ENCODE measurements at regions of chr11 and their contacts with region 1.

Region 1: DNA sequence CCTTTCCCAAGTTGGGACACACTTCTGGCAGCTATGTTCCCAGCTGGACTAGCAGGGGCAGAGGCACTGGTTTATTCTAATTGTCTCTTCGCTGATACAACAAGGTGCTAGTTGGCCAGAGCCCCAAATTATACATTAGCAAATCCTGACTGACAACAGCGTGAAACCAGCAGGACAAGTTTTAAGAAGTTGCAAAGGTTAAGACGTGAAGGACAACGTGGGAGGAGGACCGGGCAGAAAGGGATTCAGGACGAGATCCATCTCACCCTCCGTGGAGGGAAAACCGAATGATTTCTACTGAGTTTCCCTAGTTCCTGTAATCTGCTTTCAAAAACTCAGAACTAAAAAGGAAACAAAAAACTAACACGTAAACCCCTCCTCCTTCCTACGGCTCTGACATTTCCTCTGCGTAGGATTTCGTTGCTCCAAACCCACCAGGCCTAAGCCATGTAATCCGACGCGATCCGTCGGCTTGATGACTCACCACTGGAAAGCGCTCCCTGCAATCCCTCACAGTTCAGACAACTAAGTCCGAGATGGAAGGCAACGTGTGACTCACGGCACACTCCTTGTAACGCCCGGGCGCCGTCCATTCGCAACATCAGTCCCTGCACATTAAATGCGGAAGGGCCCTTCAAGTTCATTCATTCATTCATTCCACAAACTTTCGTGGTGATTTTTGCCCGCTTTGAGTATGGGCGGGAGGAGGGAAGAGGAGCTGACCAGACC is 703 bp downstream of the POGLUT3 start:
- DNase-seq: peak; percentile 89 to 94
- ATAC-seq: peak; percentile 98 to 99 (median 98)
- H3K4me3 ChIP-seq: peak overlapping the region; percentile 75
- H3K27ac ChIP-seq: peak overlapping the region; percentile 93
- H3K4me1 ChIP-seq: peaks cover 11% of the 10 kb centered on the region
- H3K27me3 ChIP-seq: no peaks in the 10 kb centered on the region
- CTCF ChIP-seq: no peak

Region 2: DNA sequence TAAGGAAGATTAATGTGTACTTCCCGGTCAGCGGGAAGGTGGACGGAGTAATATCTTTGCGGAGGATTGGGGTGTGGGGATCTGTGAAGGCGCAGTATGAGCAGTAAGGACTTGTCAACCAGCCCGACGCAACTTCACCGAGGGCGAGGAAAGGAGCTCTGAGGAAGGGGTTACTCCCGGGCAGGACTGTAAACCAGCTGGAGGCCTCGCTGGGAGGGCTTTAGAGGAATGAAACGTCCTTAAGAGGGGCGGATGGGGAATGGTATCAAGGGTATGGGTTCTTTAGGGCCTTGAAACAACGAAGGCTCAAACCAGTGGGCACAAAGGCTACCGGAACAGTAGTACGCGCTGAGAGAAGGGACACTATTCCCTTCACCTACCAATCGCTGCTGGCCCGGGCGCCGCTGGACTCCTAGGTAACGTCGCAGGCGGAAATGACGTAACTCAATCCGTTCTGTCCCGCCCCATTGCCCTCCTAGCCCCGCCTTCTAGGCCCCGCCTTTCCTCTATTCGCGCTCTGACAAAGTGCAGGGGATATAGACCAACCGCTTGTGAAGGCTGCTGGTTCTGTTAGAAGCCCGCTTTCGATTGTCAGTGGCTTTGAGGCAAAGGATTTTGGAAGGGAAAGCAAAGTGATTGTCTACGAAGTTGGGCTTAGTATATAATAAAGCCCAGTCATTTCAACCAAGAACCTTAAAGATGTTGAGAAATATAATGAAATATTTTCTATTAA is 30.2 kb before region 1 on chr11 and contains the start of gene C11orf65:
- intact Hi-C with region 1: loop called (anchors 2 kb)
- DNase-seq: peak; percentile 94 to 97
- ATAC-seq: peak; percentile 100
- H3K4me3 ChIP-seq: peak within 1 kb of the TSS; percentile 77
- H3K27ac ChIP-seq: peak within 1 kb of the TSS; percentile 96
- H3K4me1 ChIP-seq: peaks cover 4% of the 10 kb centered on the region
- H3K27me3 ChIP-seq: no peaks in the 10 kb centered on the region
- CTCF ChIP-seq: no peak
- total RNA-seq, gene C11orf65: 0.16 to 0.64 (median 0.40) TPM

Region 3: GRCh38 chr11:108593214-108593922 is 95.9 kb after region 1 on chr11 and contains the start of gene EXPH5:
- intact Hi-C with region 1: loop called in 1 of 2 experiments (anchors 5 kb)
- DNase-seq: peak; percentile 81 to 85
- ATAC-seq: peak; percentile 92 to 97 (median 95)
- H3K4me3 ChIP-seq: peak within 1 kb of the TSS; percentile 82
- H3K27ac ChIP-seq: no peak within 1 kb of the TSS
- H3K4me1 ChIP-seq: no peaks in the 10 kb centered on the region
- H3K27me3 ChIP-seq: peaks cover 0 to 19% (median 0%) of the 10 kb centered on the region in 3 donors
- CTCF ChIP-seq: no peak
- total RNA-seq, gene EXPH5: 0.15 to 0.58 (median 0.35) TPM

Region 4: DNA sequence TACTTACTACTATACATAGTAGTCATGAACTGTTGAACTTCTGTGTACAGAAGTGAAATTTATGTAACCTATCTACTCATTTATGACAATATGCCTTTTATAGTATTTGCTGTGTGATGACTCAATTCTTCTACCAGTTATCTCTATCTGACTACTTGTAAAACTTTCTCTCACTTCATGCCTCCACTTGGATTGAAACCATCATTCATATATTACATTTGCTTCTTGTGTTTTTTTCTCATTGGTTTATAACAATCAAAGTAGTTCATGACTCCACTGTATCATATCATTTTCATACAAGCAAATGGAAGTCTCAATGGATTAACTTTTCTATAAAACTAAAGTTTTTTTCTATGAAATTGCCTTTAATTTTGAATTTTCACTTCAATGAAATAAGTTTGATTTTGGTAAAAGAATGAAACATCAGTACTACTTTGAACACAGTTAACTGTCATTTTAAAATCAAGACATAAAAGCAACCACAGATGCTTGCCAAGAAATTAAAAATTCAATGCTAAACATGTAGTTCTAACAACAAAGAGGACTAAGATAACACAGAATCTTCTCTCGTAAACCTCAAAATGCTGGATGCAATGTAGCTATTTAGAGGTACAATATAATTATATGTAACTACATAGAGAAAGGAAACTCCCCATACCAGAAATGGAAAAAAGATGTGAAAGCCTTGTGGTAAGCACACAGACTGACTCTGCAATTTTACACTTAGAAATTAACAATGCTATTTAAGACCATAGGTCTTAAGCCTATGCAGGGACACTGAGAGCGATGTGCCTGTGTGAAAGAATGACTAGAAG is 123.7 kb after region 1 on chr11:
- intact Hi-C with region 1: no loop called
- DNase-seq: no peak
- ATAC-seq: no peak
- H3K4me3 ChIP-seq: no peak overlapping the region
- H3K27ac ChIP-seq: no peak overlapping the region
- H3K4me1 ChIP-seq: no peaks in the 10 kb centered on the region
- H3K27me3 ChIP-seq: peaks cover 0 to 1% (median 0%) of the 10 kb centered on the region in 3 donors
- CTCF ChIP-seq: no peak

Region 5: GRCh38 chr11:108654994-108655631 is 157.6 kb after region 1 on chr11:
- intact Hi-C with region 1: loop called in 1 of 2 experiments (anchors 10 kb)
- DNase-seq: no peak
- ATAC-seq: peak; percentile 47 to 77 (median 54)
- H3K4me3 ChIP-seq: no peak overlapping the region
- H3K27ac ChIP-seq: no peak overlapping the region
- H3K4me1 ChIP-seq: no peaks in the 10 kb centered on the region
- H3K27me3 ChIP-seq: no peaks in the 10 kb centered on the region
- CTCF ChIP-seq: peak; percentile 55

Measured in psoas muscle (tissue), 8 donors.